Activated CD4-positive, alpha-beta T cell treated with anti-CD3 and anti-CD28 coated beads, Interleukin-2, amount 10 ng/mL, durations not matched to agents 24 days and 14 days (primary cell): ENCODE measurements at regions of chr10 and their contacts with region 1.

Region 1: DNA sequence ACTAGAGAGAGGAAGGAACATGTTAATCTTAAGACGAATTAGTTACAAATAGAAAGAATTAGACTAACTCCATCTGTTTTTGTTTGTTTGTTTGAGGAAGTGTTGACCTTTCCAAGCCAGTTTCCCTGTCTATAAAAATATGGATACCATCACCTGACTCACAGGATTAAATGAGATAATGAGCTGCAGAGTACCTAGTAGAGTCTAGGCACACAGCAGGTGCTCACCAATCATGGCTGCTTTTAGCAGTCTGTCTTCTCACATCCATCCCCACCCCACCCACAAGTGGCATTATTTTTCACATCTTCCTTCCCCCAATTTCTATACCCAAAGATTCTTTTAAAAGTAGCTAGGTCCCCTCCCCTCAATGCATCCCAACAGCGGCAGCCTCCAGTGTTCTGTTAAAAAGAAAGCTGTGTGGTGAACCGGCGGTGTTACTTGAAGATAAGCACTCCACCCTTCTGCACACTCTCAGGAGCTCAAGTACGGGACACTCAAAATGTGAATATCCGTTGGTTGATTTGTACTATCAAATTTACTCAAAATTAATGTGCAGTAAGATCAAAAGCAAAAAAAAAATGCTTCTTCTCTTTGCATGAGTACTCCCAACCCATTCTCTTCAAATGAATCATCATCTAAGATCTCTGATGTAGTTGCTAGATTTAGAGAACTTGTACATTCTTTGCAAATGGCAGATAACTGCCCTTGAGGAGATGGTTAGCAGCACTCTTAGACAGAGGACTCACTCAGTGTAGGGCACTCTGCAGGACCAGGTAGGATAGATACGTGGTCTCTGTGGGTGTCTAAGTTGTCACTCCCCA is 145.4 kb upstream of the ASAH2 start:
- DNase-seq: peak; percentile 64
- H3K4me3 Mint-ChIP-seq: peak overlapping the region; percentile 68
- H3K27ac Mint-ChIP-seq: peak overlapping the region; percentile 87
- H3K4me1 Mint-ChIP-seq: peaks cover 31% of the 10 kb centered on the region
- H3K27me3 Mint-ChIP-seq: no peaks in the 10 kb centered on the region

Region 2: DNA sequence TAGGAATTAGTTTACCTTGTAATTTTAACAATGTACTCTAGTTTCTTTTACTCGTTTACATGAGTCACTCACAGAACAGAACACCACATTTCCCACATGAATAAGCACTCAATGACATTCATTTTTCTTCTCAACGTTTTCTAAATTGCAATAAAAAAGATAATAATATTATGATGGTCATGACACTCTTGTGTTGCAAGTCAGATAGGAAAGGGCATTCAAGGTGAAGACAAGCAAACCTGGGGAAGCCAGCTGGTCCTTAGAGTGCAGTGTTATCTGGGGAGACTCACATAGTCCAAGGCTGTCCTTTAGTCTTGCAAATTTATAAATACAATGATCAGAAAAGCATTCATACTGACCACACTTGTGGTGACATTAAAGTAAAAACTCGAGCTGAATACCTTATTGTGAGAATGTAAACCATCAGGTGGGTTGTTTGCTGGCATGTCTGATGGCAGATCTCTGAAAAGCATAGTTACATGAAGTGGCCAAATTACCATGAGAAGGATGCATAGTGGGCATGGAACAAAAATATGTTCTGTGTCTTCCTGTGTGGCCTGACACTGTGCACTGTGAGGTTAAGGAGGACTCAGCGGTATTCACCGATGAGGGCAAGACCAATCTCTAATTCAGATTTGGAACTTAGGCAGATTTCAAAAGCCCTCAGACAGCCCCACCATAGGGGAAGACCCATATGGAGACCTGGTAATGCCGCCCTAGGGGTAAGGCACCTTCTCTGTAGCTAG is 13.5 kb after region 1 on chr10:
- intact Hi-C with region 1: loop called (anchors 1 kb)
- DNase-seq: no peak
- H3K4me3 Mint-ChIP-seq: no peak overlapping the region
- H3K27ac Mint-ChIP-seq: no peak overlapping the region
- H3K4me1 Mint-ChIP-seq: peaks cover 31% of the 10 kb centered on the region
- H3K27me3 Mint-ChIP-seq: no peaks in the 10 kb centered on the region

Region 3: GRCh38 chr10:50552771-50553535 is 156.3 kb after region 1 on chr10:
- intact Hi-C with region 1: no loop called
- DNase-seq: peak; percentile 61
- H3K4me3 Mint-ChIP-seq: no peak overlapping the region
- H3K27ac Mint-ChIP-seq: no peak overlapping the region
- H3K4me1 Mint-ChIP-seq: peaks cover 3% of the 10 kb centered on the region
- H3K27me3 Mint-ChIP-seq: no peaks in the 10 kb centered on the region